Activated B cell treated with CpG ODN at 0.5 μM for 24 hours (primary cell): ENCODE measurements at regions of chrX and their contacts with region 1.

Region 1: DNA sequence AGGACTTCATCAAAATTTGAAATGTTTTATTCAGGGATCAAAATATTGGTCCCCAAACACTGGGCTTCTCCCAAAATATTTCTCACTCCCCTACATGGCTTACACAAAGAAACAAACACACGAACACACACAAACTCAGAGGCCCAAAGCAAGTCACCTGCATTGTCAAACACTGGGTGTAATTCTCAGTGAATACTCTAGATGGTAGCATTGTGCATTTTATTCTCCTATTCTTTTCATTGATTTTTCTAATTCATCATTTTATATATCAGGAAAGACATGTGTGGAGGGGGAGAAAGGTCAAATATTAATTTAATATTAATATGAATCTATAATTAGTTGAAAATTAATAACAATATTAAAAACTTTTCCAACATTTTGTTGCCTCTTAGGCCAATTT is 72.3 kb upstream of the TNMD start:
- DNase-seq: no peak
- ATAC-seq: no peak
- H3K4me3 Mint-ChIP-seq: no peak overlapping the region
- H3K27ac Mint-ChIP-seq: no peak overlapping the region
- H3K4me1 Mint-ChIP-seq: no peaks in the 10 kb centered on the region
- H3K27me3 Mint-ChIP-seq: peaks cover 2% of the 10 kb centered on the region
- CTCF ChIP-seq: no peak

Region 2: DNA sequence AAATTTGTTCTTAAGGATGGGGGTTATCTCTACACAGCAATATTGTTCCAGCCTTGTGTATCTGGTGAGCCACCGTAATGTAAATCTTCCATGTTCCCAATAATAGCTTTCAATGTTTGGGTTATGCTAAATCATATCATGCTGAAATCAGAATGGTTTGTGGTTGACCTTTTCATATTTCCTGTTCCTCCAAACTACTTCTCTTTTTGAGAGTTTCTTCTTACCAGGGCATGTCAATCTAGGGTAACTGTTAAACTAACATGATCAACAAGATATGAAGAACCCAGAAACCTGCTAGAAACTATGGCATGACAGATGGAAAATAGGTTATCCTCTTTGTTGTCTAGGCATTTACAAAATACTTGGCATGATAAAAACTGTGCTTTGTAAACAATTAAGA is 94.3 kb after region 1 on chrX:
- CTCF ChIA-PET with region 1: interaction called, 5 read pairs
- POLR2A ChIA-PET with region 1: no interaction called
- intact Hi-C with region 1: loop called (anchors 2 kb)
- DNase-seq: no peak
- ATAC-seq: peak; percentile 31
- H3K4me3 Mint-ChIP-seq: no peak overlapping the region
- H3K27ac Mint-ChIP-seq: no peak overlapping the region
- H3K4me1 Mint-ChIP-seq: peaks cover 18% of the 10 kb centered on the region
- H3K27me3 Mint-ChIP-seq: peaks cover 5% of the 10 kb centered on the region
- CTCF ChIP-seq: no peak

Region 3: DNA sequence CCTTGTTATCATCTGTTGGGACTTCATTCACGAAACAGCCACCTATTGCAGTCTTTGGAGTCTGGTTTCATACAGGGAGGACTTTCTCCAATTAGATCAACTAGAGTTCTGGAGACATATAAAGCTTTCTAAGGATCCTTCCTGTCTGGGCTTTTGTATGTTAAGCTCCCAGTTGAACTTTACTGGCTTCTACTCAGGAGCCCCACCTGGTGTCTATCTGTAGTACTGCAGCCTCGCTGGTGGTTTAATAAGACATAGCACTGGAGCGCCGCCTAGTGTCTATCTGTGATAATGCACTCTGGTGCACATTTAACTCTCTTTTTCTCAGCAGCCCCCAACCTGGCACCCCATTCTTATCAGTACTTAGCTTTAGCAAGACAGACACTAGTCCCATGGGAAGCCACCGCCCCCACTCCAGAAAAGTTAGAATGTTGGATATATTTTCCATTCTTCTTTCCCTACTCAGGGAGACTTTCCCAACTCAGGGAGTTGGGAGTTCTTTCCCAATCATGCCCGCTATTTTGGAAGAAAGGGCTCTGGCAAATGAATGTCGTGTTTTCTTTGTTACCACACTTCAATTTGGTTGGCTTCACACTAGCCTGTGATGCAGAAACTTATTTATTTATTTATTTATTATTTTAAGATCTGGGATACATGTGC is 256.3 kb after region 1 on chrX:
- CTCF ChIA-PET with region 1: interaction called, 25 read pairs
- POLR2A ChIA-PET with region 1: no interaction called
- intact Hi-C with region 1: loop called (anchors 1 kb)
- DNase-seq: peak; percentile 68
- ATAC-seq: peak; percentile 96
- H3K4me3 Mint-ChIP-seq: no peak overlapping the region
- H3K27ac Mint-ChIP-seq: no peak overlapping the region
- H3K4me1 Mint-ChIP-seq: no peaks in the 10 kb centered on the region
- H3K27me3 Mint-ChIP-seq: no peaks in the 10 kb centered on the region
- CTCF ChIP-seq: no peak